ENCODE measurements at regions of chr14 and their contacts with region 1.

Region 1: DNA sequence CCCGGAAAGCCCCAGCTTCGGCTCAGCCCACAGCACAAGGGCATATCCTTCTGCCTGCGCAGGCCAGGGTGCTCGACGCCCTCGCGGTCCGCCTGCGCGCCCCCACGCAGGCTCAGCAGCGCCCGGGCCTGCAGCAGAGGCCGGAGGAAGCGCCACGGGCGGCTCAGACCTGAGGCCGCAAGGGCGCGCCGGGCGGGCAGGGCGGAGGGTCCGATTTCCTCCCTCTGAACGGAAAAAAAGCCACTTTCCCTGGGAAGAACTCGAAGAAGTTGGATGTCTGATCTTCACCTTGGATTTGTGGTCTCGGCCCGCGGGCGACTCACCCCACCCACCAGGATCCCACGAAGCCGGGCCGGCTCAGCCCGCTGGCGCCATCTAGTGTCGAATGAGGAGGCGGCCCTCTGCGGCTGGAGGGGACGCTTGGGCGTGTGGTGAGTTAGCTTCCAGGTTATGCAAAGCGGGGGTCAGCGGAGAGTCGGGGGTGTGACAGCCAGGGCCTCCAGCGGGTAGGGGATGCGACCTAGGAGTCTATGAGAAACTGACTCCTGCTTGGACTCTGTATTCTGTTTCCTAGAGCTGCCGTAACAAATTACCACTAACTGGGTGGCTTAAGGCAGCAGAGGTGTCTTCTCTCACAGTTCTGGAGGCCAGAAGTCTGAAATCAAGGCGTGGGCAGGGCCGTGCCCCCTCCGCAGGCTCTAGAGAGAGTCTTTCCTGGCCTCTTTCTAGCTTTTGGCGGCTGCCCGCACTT is 40.0 kb upstream of the SRSF5 start:
- DNase-seq: peak; percentile 88 to 96
- ATAC-seq: peak; percentile 96
- H3K4me3 ChIP-seq: no peak overlapping the region
- H3K27ac ChIP-seq: no peak overlapping the region
- H3K4me1 ChIP-seq: no peaks in the 10 kb centered on the region
- H3K27me3 ChIP-seq: no peaks in the 10 kb centered on the region

Region 2: GRCh38 chr14:69580009-69580577 is 146.8 kb before region 1 on chr14:
- intact Hi-C with region 1: loop called (anchors 1 to 2 kb)
- DNase-seq: no peak
- ATAC-seq: peak; percentile 58
- H3K4me3 ChIP-seq: no peak overlapping the region
- H3K27ac ChIP-seq: no peak overlapping the region
- H3K4me1 ChIP-seq: no peaks in the 10 kb centered on the region
- H3K27me3 ChIP-seq: no peaks in the 10 kb centered on the region

Region 3: GRCh38 chr14:69600304-69600891 is 126.5 kb before region 1 on chr14:
- intact Hi-C with region 1: loop called (anchors 1 to 5 kb)
- DNase-seq: no peak
- ATAC-seq: no peak
- H3K4me3 ChIP-seq: no peak overlapping the region
- H3K27ac ChIP-seq: no peak overlapping the region
- H3K4me1 ChIP-seq: no peaks in the 10 kb centered on the region
- H3K27me3 ChIP-seq: no peaks in the 10 kb centered on the region

Measured in aorta (tissue), 5 donors.